Head of caudate nucleus (tissue), 42 donors: ENCODE measurements at regions of chr6 and their contacts with region 1.

Region 1: DNA sequence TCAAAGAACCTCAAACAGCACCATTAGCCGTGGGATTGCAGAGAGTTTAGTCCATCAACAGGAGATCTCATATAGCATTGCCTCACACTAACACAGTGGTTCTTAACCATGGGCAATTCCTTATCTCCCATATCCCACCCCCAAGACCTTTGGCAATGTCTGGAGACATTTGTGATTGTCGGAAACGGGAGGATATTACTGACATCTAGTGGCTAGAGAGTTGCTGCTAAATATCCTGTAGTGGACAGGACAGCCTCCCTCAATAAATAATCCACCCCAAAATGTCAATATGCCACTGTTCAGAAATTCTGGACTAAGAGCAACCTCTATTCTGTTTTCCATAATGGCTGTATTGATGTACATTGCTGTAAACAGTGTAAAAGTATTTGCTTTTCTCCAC is 210.1 kb upstream of the CCN2 start:
- DNase-seq: peak in 10 of 42 donors; percentile 6 to 64 (median 13)

Region 2: DNA sequence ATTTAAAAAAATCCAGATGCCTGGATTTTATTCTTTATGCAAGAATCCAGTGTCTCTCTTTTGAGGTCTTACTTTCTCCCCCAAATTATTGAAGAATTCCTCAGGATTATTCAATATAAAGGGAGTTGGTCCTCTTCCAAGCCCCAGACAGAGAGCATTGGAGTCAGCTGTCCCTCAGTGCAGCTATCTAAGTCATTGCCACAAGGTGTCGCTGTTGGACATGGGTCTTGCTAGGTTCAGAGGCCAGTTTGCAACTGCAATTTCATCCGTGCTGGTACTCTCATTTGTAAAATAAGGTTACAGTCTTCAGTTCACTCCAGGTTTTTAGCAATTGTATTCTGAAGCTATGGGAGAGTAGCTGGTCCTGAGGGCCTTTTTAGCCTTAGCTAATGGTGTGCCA is 237.9 kb before region 1 on chr6:
- intact Hi-C with region 1: loop called (anchors 5 kb)
- DNase-seq: peak in 32 of 42 donors; percentile 4 to 80 (median 42)

Region 3: DNA sequence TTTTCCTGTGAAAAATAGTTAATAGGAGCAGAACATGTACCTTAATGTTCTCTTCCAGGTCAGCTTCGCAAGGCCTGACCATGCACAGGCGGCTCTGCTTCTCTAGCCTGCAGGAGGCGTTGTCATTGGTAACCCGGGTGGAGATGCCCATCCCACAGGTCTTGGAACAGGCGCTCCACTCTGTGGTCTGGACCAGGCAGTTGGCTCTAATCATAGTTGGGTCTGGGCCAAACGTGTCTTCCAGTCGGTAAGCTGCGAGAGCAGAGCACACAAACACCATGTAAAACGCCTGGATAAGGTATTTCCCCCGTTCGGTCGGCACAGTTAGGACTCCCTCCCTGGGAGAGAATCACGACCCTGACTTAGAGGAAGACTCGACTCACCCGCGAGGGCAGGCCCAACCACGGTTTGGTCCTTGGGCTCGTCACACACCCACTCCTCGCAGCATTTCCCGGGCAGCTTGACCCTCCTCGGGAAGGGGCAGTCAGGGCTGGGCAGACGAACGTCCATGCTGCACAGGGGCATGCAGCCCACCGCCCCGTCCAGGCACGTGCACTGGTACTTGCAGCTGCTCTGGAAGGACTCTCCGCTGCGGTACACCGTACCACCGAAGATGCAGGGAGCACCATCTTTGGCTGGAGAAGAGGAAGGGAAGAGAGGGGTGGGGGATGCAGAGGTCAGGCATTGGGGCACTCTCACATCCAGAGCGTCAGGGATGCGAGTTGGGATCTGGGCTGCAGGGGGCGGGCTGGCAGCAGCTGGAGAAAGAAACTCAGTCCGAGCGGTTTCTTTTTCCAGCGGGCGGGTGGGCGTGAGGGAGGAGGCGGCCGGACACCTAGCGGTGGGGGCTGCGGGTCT is 211.1 kb before region 1 on chr6:
- intact Hi-C with region 1: loop called (anchors 10 kb)
- DNase-seq: peak; percentile 50 to 89 (median 72)